Activated B cell treated with CpG ODN at 0.5 μM for 24 hours (primary cell): ENCODE measurements at regions of chr9 and their contacts with region 1.

Region 1: GRCh38 chr9:128026773-128027541 is 40.2 kb downstream of the NAIF1 start:
- DNase-seq: no peak
- ATAC-seq: peak; percentile 14
- H3K4me3 Mint-ChIP-seq: peak overlapping the region; percentile 67
- H3K27ac Mint-ChIP-seq: peak overlapping the region; percentile 88
- H3K4me1 Mint-ChIP-seq: peaks cover 86% of the 10 kb centered on the region
- H3K27me3 Mint-ChIP-seq: no peaks in the 10 kb centered on the region
- CTCF ChIP-seq: no peak

Region 2: DNA sequence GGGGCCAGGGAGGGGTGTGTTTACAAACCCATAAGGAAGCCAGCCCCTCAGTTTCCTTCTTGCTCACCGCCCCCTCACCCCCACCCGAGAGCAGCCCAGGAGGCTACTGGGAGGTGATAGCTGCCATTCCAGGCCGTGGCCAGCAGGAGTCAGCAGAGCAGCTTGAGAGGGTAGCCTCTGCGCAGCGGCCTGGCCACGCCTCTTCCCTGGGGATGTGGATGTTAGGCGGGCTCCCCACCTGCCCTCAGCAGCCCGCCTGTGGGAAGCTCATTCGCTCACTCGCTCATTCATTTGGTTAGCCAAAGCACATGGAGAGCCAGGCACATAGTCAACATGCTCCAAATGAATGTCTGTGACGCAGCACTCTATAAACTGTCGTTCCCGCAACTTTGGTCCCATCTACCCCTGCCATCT is 83.2 kb before region 1 on chr9:
- CTCF ChIA-PET with region 1: interaction called, 160 read pairs
- POLR2A ChIA-PET with region 1: interaction called, 4 read pairs
- intact Hi-C with region 1: no loop called
- DNase-seq: peak; percentile 71
- ATAC-seq: peak; percentile 93
- H3K4me3 Mint-ChIP-seq: no peak overlapping the region
- H3K27ac Mint-ChIP-seq: peak overlapping the region; percentile 73
- H3K4me1 Mint-ChIP-seq: peaks cover 21% of the 10 kb centered on the region
- H3K27me3 Mint-ChIP-seq: no peaks in the 10 kb centered on the region
- CTCF ChIP-seq: no peak

Region 3: DNA sequence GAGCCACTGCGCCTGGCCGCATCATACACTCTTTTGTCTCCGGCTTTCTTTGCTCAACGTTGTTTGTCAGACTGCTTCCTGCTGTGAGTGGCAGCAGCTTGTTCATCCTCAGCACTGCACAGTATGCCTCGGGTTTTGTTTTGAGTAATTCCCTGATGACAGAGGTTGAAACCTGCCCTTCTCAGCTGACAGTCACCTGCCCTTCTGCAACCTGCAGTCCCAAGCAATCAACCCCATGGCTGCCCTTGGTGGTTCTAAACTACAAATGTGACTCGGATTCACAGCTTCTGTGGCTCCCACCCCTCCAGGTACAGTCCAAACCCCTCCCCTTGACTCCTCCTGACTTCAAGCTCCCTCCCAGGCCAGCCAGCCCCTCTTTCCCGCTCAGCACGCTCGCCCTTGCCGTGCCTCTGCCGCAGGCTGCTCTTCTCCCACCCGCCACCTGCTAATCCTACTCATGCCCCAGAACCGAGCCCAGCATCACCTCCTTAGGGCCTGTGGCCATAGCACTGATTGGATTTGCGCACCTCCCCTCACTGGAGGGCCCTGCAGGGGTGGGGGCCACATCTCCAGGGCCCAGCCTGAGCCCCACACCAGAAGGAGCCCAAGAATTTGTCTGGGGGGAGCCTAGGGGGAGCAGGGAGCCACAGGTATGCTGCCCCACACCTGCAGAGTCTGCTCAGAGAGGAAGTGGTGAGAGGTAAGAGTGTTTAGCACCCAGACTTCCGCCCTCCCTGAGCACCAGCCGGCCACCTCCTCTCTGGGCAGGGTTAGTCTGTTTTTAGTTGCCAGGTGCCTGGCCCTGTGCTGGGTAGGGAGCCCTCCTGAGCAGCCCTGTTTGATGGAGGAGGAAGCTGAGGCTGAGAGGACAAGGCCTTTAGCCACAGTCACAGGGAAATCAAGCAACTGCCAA is 56.3 kb before region 1 on chr9:
- CTCF ChIA-PET with region 1: interaction called, 4 read pairs
- POLR2A ChIA-PET with region 1: interaction called, 13 read pairs
- intact Hi-C with region 1: loop called (anchors 2 kb)
- DNase-seq: peak; percentile 50
- ATAC-seq: peak; percentile 74
- H3K4me3 Mint-ChIP-seq: peak overlapping the region; percentile 79
- H3K27ac Mint-ChIP-seq: peak overlapping the region; percentile 97
- H3K4me1 Mint-ChIP-seq: peaks cover 100% of the 10 kb centered on the region
- H3K27me3 Mint-ChIP-seq: no peaks in the 10 kb centered on the region
- CTCF ChIP-seq: no peak

Region 4: GRCh38 chr9:127987103-127987614 is 39.8 kb before region 1 on chr9:
- CTCF ChIA-PET with region 1: interaction called, 4 read pairs
- POLR2A ChIA-PET with region 1: interaction called, 78 read pairs
- intact Hi-C with region 1: no loop called
- DNase-seq: no peak
- ATAC-seq: peak; percentile 35
- H3K4me3 Mint-ChIP-seq: peak overlapping the region; percentile 36
- H3K27ac Mint-ChIP-seq: peak overlapping the region; percentile 85
- H3K4me1 Mint-ChIP-seq: peaks cover 65% of the 10 kb centered on the region
- H3K27me3 Mint-ChIP-seq: no peaks in the 10 kb centered on the region
- CTCF ChIP-seq: no peak

Region 5: GRCh38 chr9:128007566-128008138 is 19.3 kb before region 1 on chr9:
- CTCF ChIA-PET with region 1: interaction called, 3 read pairs
- POLR2A ChIA-PET with region 1: interaction called, 37 read pairs
- intact Hi-C with region 1: loop called (anchors 1 kb)
- DNase-seq: peak; percentile 51
- ATAC-seq: peak; percentile 78
- H3K4me3 Mint-ChIP-seq: peak overlapping the region; percentile 49
- H3K27ac Mint-ChIP-seq: peak overlapping the region; percentile 94
- H3K4me1 Mint-ChIP-seq: peaks cover 72% of the 10 kb centered on the region
- H3K27me3 Mint-ChIP-seq: no peaks in the 10 kb centered on the region
- CTCF ChIP-seq: no peak